ENCODE measurements at regions of chr9 and their contacts with region 1.

Region 1: GRCh38 chr9:93962561-93963440 is 7.6 kb upstream of the BARX1 start:
- DNase-seq: peak; percentile 84
- H3K4me3 Mint-ChIP-seq: no peak overlapping the region
- H3K27ac Mint-ChIP-seq: no peak overlapping the region
- H3K4me1 Mint-ChIP-seq: peaks cover 29% of the 10 kb centered on the region
- H3K27me3 Mint-ChIP-seq: peaks cover 49% of the 10 kb centered on the region

Region 2: GRCh38 chr9:93682232-93682968 is 280.4 kb before region 1 on chr9:
- CTCF ChIA-PET with region 1: interaction called, 26 read pairs
- POLR2A ChIA-PET with region 1: interaction called, 3 read pairs
- DNase-seq: peak; percentile 68
- H3K4me3 Mint-ChIP-seq: no peak overlapping the region
- H3K27ac Mint-ChIP-seq: no peak overlapping the region
- H3K4me1 Mint-ChIP-seq: no peaks in the 10 kb centered on the region
- H3K27me3 Mint-ChIP-seq: peaks cover 3% of the 10 kb centered on the region

Region 3: DNA sequence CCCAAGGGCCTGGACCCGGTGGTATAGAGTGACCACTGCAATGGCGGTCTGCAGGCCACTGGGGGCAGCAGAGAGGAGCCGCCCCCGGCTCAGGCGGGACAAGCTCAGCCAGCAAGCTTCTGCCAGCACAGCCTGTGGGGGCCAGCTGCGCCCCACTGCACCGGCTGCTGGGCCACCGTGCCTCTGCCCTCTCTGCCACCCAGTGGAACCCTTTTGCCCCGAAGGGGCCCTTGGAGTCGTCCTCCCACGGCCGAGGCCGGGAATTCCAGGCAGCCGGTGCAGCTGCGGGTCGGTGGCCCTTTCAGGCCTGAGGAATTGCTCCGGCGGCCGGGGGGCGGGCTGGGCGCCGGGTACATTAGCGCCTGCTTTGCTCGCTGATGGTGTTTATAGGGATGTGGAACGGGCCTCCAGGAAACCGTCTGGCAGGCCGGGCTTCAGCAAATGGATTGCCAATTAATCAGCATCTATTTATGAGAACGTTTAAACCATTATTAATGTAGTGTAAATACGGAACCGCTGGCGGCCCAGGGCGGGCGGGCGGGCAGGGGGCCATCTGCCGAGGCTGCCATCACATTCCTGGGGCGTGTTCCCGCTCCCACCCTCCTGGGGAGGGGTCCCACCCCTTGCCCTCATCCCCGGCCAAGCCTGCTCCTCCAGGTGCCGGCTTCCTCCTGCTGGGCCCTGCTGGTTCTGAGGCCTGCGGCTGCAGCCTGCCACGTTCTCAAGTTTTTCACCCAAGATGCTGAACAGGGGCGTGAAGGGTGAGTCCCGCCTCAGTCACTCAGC is 135.1 kb before region 1 on chr9:
- CTCF ChIA-PET with region 1: interaction called, 18 read pairs
- POLR2A ChIA-PET with region 1: no interaction called
- DNase-seq: peak; percentile 30
- H3K4me3 Mint-ChIP-seq: no peak overlapping the region
- H3K27ac Mint-ChIP-seq: no peak overlapping the region
- H3K4me1 Mint-ChIP-seq: peaks cover 5% of the 10 kb centered on the region
- H3K27me3 Mint-ChIP-seq: peaks cover 20% of the 10 kb centered on the region

Region 4: GRCh38 chr9:93893899-93894690 is 68.7 kb before region 1 on chr9:
- CTCF ChIA-PET with region 1: no interaction called
- POLR2A ChIA-PET with region 1: no interaction called
- DNase-seq: peak; percentile 13
- H3K4me3 Mint-ChIP-seq: no peak overlapping the region
- H3K27ac Mint-ChIP-seq: no peak overlapping the region
- H3K4me1 Mint-ChIP-seq: peaks cover 12% of the 10 kb centered on the region
- H3K27me3 Mint-ChIP-seq: no peaks in the 10 kb centered on the region

Measured in activated CD4-positive, alpha-beta memory T cell treated with anti-CD3 and anti-CD28 coated beads, Interleukin-2, amount 10 ng/mL, durations not matched to agents 7 days and 5 days (primary cell).